T-cell (primary cell): ENCODE measurements at regions of chr5 and their contacts with region 1.

Region 1: DNA sequence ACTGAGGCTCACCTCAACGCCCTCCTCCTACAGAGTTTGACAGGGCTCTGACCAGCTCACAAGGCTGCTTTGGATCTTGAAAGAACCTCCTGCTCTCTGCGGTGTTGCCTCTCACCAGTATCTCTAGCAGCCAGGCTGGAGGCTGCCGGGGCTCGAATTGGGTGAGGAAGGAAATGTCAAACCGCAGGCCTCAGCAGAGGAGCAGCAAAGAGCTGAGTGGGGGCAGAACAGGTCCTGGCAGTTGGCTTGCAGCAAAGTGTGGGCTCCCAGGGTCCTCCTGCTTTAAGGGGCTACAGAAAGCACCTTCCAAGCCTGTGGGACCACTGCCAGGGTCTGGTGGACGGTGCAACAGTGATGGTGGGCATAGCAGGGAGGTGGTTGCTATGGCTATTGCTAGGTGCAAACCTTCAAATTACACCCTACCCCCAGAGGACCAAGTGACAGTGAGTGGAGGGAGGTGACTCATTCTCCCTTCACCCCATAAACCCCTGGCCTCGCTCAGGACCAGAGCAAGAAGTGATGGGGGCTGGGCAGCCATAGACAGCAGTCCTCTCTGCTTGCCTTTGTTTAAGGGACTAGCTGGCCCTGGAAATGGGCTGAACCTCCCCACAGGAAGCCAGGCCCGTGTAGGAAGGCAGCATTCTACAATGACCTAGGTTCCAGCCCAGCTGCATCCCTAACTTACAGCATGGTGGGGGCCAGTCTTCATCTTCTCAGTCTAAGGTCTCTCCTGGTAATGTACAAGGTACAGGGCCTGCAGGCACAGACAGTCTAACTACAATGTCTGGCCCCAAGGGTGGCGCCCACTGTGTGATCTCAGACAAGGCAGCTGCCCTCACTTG is 18.7 kb downstream of the LCP2 start:
- DNase-seq: peak; percentile 80 to 95 (median 88)
- ATAC-seq: peak; percentile 78 to 80 (median 79)
- H3K4me3 ChIP-seq: peak overlapping the region; percentile 35 to 49
- H3K4me3 Mint-ChIP-seq: peak overlapping the region; percentile 68 to 99 (median 75)
- H3K27ac ChIP-seq: peak overlapping the region; percentile 73
- H3K27ac Mint-ChIP-seq: peak overlapping the region; percentile 86 to 99
- H3K4me1 ChIP-seq: peaks cover 79 to 97% of the 10 kb centered on the region in 2 experiments
- H3K4me1 Mint-ChIP-seq: peaks cover 97 to 100% (median 97%) of the 10 kb centered on the region in 3 donors
- H3K27me3 ChIP-seq: no peaks in the 10 kb centered on the region
- H3K27me3 Mint-ChIP-seq: no peaks in the 10 kb centered on the region

Region 2: GRCh38 chr5:170262061-170263045 is 16.5 kb before region 1 on chr5:
- CTCF ChIA-PET with region 1: interaction called, 10 to 14 read pairs
- POLR2A ChIA-PET with region 1: interaction called in 1 of 2 experiments, 3 read pairs
- DNase-seq: peak in 33 of 35 experiments; percentile 29 to 81 (median 57)
- ATAC-seq: peak; percentile 84 to 90 (median 86)
- H3K4me3 ChIP-seq: peak overlapping the region in 1 of 2 donors; percentile 18
- H3K4me3 Mint-ChIP-seq: peak overlapping the region; percentile 37 to 64 (median 62)
- H3K27ac ChIP-seq: peak overlapping the region; percentile 73
- H3K27ac Mint-ChIP-seq: peak overlapping the region; percentile 96 to 97
- H3K4me1 ChIP-seq: peaks cover 66 to 67% of the 10 kb centered on the region in 2 experiments
- H3K4me1 Mint-ChIP-seq: peaks cover 90 to 94% (median 93%) of the 10 kb centered on the region in 3 donors
- H3K27me3 ChIP-seq: no peaks in the 10 kb centered on the region
- H3K27me3 Mint-ChIP-seq: no peaks in the 10 kb centered on the region

Region 3: GRCh38 chr5:170267431-170268152 is 11.2 kb before region 1 on chr5:
- CTCF ChIA-PET with region 1: interaction called, 10 to 14 read pairs
- POLR2A ChIA-PET with region 1: no interaction called
- DNase-seq: peak; percentile 52 to 93 (median 78)
- ATAC-seq: peak; percentile 59 to 76 (median 65)
- H3K4me3 ChIP-seq: no peak overlapping the region
- H3K4me3 Mint-ChIP-seq: peak overlapping the region; percentile 58 to 77 (median 62)
- H3K27ac ChIP-seq: peak overlapping the region; percentile 80
- H3K27ac Mint-ChIP-seq: peak overlapping the region; percentile 91 to 95
- H3K4me1 ChIP-seq: peaks cover 68 to 82% of the 10 kb centered on the region in 2 experiments
- H3K4me1 Mint-ChIP-seq: peaks cover 88 to 96% (median 95%) of the 10 kb centered on the region in 3 donors
- H3K27me3 ChIP-seq: no peaks in the 10 kb centered on the region
- H3K27me3 Mint-ChIP-seq: no peaks in the 10 kb centered on the region

Region 4: DNA sequence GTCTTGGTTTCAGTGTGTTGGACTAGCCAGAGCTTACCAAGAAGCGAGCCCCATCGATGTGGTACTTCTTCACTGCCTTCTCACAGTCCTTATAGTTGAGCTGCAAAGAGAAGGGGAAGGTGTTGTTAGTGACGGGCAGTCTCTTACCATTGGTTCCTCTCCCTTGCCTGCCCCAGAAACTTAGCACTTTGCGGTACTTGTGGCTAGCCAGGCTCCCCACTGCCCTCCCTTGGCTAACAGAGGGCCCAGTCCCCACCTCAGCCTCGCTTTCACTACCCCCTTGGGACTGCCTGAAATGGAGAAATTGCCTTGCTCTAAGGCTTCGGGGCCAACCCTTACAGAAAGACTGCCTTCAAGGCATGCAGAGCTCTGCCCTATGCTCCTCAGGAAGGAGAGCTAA is 14.4 kb after region 1 on chr5:
- CTCF ChIA-PET with region 1: interaction called, 20 to 111 read pairs
- POLR2A ChIA-PET with region 1: interaction called, 6 to 10 read pairs
- DNase-seq: peak in 28 of 35 experiments; percentile 29 to 74 (median 46)
- ATAC-seq: peak; percentile 16 to 40 (median 28)
- H3K4me3 ChIP-seq: peak overlapping the region; percentile 20 to 94
- H3K4me3 Mint-ChIP-seq: peak overlapping the region; percentile 99
- H3K27ac ChIP-seq: peak overlapping the region; percentile 88
- H3K27ac Mint-ChIP-seq: peak overlapping the region; percentile 99
- H3K4me1 ChIP-seq: peaks cover 58 to 66% of the 10 kb centered on the region in 2 experiments
- H3K4me1 Mint-ChIP-seq: peaks cover 75 to 94% (median 76%) of the 10 kb centered on the region in 3 donors
- H3K27me3 ChIP-seq: no peaks in the 10 kb centered on the region
- H3K27me3 Mint-ChIP-seq: no peaks in the 10 kb centered on the region

Region 5: DNA sequence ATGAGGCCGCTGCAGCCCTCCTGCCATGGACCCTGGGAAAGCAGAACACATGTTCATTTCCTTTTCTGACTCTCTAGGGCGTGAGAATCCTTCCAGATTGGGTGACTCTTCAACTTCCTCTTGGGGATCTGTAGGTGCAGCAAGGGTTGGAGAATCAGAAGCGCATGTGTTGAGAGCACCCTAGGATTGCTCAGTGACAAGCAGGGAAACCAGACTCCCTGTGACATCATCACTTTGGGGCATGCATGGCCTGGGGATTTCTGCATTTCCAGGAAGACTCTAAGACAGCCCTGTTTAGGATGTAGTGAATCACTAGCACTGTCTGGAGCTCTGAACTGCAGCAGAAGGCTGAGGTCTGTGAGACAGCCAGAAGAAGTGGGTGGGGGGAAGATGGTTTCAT is 33.8 kb after region 1 on chr5:
- CTCF ChIA-PET with region 1: interaction called in 1 of 2 experiments, 11 read pairs
- POLR2A ChIA-PET with region 1: no interaction called
- DNase-seq: peak in 17 of 35 experiments; percentile 16 to 79 (median 39)
- ATAC-seq: peak; percentile 67 to 85 (median 78)
- H3K4me3 ChIP-seq: no peak overlapping the region
- H3K4me3 Mint-ChIP-seq: peak overlapping the region; percentile 55 to 81 (median 64)
- H3K27ac ChIP-seq: peak overlapping the region; percentile 74
- H3K27ac Mint-ChIP-seq: peak overlapping the region; percentile 94 to 97
- H3K4me1 ChIP-seq: peaks cover 37 to 48% of the 10 kb centered on the region in 2 experiments
- H3K4me1 Mint-ChIP-seq: peaks cover 56 to 69% (median 69%) of the 10 kb centered on the region in 3 donors
- H3K27me3 ChIP-seq: no peaks in the 10 kb centered on the region
- H3K27me3 Mint-ChIP-seq: no peaks in the 10 kb centered on the region

Region 6: DNA sequence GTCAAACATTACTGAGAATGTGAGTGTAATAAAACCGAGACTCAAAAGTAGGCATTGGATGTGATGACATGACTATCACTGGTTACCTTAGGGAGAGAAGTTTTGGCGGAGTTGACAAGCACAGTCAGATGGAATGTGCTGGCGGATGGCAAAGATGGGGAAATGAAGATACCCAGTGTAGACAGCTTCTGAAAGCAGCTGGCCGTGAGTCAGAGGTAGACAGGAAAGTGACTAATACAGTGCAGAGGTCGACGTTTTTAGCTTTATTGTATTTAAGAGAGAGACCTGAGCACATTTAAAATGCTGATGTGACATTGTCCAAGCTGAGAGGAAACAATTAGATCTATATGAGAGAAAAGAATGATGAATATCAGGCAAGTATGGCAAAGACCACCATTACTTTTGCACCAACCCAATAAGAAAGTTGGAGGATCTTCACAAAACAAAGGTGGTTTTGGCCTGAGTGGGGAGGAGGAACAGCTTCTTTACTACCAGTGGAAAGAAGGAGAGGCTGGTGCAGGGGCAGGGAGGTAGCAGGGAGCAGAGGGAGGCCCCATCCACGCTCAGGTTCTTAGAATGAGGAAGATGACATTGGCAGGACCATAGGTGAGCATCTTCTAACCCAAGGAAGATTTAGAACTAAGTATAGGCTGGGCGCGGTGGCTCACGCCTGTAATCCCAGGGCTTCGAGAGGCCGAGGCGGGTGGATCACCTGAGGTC is 188.3 kb after region 1 on chr5:
- CTCF ChIA-PET with region 1: no interaction called
- POLR2A ChIA-PET with region 1: no interaction called
- DNase-seq: no peak
- ATAC-seq: peak in 2 of 4 experiments; percentile 33 to 40
- H3K4me3 ChIP-seq: no peak overlapping the region
- H3K4me3 Mint-ChIP-seq: no peak overlapping the region
- H3K27ac ChIP-seq: no peak overlapping the region
- H3K27ac Mint-ChIP-seq: no peak overlapping the region
- H3K4me1 ChIP-seq: no peaks in the 10 kb centered on the region
- H3K4me1 Mint-ChIP-seq: no peaks in the 10 kb centered on the region
- H3K27me3 ChIP-seq: peaks cover 0 to 12% of the 10 kb centered on the region in 2 experiments
- H3K27me3 Mint-ChIP-seq: peaks cover 8% of the 10 kb centered on the region in 2 donors